ENCODE measurements at regions of chr7 and their contacts with region 1.

Region 1: DNA sequence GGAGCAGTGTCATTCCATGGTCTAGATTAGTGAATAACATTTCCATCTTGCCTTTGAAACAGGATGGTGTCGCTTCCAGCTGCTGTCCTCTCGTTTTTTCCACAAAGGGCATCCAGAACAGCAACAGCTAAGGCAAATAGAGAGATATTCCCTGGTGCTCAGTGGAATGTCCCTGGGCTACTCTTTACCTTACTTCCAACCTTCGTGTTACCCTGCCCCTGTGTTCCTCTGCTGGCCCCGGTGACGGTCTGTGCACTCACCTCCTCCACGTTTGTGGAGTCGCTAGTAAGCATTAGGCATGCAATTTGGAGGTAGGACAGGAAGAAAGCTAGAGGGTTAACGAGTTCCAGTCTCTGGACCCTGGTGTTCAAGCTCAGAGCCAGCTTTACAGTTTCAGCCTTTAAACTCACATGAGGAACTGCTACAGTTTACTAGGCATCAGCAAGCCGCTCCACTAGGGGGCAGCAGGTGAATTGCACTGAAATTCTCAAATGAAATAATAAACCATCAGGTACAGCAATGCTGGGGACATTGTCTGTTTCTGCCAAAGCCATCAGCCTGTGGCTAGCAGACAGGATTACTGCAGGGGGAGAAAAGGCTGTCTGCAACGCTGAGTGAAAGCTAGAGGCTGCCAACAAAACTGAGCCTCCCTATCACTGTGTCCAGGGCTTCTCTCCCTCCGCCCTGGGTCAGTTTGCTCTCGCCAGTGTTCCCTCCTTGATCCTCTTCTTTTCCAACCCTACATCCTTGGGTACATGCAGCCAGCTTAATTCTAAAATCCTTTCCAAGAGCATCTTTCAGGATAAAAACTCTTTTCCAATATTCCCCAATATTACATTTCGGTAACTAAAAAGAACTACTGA is 9.0 kb downstream of the MRPL32 start:
- DNase-seq: peak; percentile 68 to 76 (median 74)
- ATAC-seq: peak; percentile 86 to 94 (median 90)
- H3K4me3 ChIP-seq: no peak overlapping the region
- H3K27ac ChIP-seq: no peak overlapping the region
- H3K4me1 ChIP-seq: no peaks in the 10 kb centered on the region
- H3K27me3 ChIP-seq: no peaks in the 10 kb centered on the region
- CTCF ChIP-seq: peak; percentile 80 to 94 (median 89)
- POLR2A ChIP-seq: no peak

Region 2: DNA sequence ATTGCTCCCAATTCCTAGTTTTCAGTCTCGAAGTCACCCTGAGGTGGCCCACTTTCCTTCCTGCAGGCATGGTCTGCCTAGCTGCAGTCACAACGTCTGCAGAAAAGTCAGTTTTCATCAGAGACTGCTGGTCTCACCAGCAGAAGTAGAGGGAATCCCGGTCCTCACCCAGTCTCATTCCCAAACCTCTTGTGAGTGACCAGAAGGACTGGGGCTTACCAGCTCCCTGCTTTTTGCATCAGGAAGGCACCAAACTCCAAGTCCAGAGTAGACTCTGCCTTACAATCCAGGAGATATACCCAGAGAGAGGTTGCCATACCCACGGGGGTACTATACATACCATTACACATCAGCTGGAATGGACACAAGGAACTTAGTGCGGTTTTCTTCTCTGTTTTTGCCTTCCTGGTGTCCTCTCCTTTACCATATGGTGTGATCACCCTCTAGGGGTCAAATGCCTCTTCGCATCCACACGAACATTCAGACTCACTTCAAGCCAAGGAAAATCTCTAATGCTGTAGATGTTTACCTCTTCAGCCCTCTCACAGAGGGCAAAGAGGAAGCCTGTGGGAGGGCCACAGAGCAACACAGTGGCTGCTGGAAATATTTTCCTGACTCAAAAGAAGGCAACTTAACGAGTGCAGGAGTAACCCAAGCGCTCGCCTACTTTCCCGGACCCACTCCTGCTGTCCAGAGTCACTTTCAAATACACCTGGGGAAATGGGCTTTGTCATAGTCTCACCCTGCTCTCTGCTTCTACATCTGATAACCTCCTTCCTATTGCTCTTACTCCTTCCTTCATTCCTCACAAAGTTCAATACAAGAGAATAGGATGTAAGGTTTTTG is 250.2 kb before region 1 on chr7:
- intact Hi-C with region 1: no loop called
- DNase-seq: no peak
- ATAC-seq: peak in 1 of 4 donors; percentile 30
- H3K4me3 ChIP-seq: no peak overlapping the region
- H3K27ac ChIP-seq: no peak overlapping the region
- H3K4me1 ChIP-seq: no peaks in the 10 kb centered on the region
- H3K27me3 ChIP-seq: no peaks in the 10 kb centered on the region
- CTCF ChIP-seq: peak in 3 of 4 donors; percentile 17 to 25 (median 23)
- POLR2A ChIP-seq: no peak

Region 3: DNA sequence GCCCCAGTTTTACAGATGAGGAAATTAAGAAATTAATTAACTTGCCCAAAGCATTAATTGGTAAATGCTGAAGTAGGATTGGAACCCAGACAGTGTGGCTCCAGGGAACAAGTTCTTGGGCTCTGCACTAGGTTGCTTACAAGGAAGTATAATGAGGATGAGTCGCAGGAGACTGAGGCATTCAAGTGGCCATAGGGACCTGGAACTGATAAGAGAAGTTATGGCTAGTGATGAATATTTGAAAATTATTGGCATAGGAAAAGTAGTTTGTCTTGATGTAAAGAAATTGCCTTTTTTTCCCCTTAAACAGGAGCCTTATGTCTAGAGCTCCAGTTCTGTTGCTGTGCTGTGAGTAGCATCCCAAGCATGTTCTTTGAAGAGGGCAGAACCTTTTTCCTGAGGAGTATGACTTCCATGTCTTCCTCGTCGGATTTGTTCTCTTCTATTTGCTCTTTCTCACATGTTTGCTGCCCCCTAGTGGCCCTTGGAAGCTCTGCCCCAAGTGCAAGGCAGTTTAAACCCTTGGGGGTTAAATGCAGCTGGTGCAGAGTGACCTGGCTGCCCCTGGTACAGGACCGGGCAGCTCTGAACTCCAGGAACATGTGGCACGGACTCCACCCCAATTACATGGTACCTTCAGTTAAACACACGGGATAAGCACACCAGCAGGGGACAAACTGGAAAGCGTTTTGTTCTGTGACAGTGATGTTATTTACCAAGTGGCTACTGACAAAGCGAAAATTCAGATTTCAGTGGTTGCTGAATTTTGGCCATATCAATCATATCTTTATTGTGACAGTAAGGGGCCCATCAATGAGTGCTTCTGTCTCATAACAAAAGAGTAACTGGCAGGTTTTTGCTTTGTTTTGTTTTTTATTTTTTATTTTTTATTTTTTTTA is 320.0 kb after region 1 on chr7:
- intact Hi-C with region 1: loop called in 1 of 2 experiments (anchors 10 kb)
- DNase-seq: peak; percentile 63 to 74 (median 69)
- ATAC-seq: peak; percentile 92 to 95 (median 93)
- H3K4me3 ChIP-seq: no peak overlapping the region
- H3K27ac ChIP-seq: no peak overlapping the region
- H3K4me1 ChIP-seq: no peaks in the 10 kb centered on the region
- H3K27me3 ChIP-seq: no peaks in the 10 kb centered on the region
- CTCF ChIP-seq: peak; percentile 69 to 95 (median 94)
- POLR2A ChIP-seq: no peak

Region 4: GRCh38 chr7:43439631-43440401 is 498.6 kb after region 1 on chr7:
- intact Hi-C with region 1: loop called in 1 of 2 experiments (anchors 10 kb)
- DNase-seq: peak in 2 of 3 donors; percentile 44 to 47
- ATAC-seq: peak; percentile 61 to 74 (median 70)
- H3K4me3 ChIP-seq: no peak overlapping the region
- H3K27ac ChIP-seq: no peak overlapping the region
- H3K4me1 ChIP-seq: no peaks in the 10 kb centered on the region
- H3K27me3 ChIP-seq: no peaks in the 10 kb centered on the region
- CTCF ChIP-seq: peak; percentile 52 to 85 (median 71)
- POLR2A ChIP-seq: no peak

Measured in right lobe of liver (tissue), 6 donors.